ENCODE measurements at regions of chr12 and their contacts with region 1.

Region 1: GRCh38 chr12:51217968-51218606 is at the start of gene POU6F1:
- DNase-seq: no peak
- H3K4me3 ChIP-seq: peak within 1 kb of the TSS; percentile 76 to 89
- H3K27ac ChIP-seq: peak within 1 kb of the TSS; percentile 96
- H3K4me1 ChIP-seq: peaks cover 13% of the 10 kb centered on the region
- H3K27me3 ChIP-seq: no peaks in the 10 kb centered on the region
- CTCF ChIP-seq: peak in 1 of 3 experiments; percentile 40
- POLR2A ChIP-seq: peak in 1 of 2 donors; percentile 21
- total RNA-seq, gene POU6F1: 16.5 TPM

Region 2: DNA sequence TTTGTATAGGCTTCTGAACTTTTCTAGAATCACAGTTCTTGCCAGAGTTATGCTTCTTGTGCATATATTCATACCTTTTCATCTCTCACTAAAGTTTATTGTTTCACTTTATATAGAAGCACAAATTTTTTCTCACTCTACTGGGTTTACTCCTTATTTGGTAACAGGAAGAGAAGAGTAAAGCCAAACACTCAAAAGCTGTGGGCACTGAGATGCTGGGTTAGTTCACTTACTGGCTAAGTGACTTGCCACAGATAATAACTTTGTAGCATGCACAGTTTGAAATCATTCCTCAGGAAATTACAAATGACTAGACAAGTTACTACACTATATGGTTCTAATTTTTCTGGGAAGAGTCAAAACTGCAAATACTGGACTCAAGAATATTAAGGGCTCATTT is 258.0 kb before region 1 on chr12:
- intact Hi-C with region 1: no loop called
- DNase-seq: no peak
- H3K4me3 ChIP-seq: no peak overlapping the region
- H3K27ac ChIP-seq: no peak overlapping the region
- H3K4me1 ChIP-seq: no peaks in the 10 kb centered on the region
- H3K27me3 ChIP-seq: no peaks in the 10 kb centered on the region
- CTCF ChIP-seq: no peak
- POLR2A ChIP-seq: no peak

Region 3: GRCh38 chr12:51172515-51173431 is 45.3 kb before region 1 on chr12 and contains the start of gene TFCP2:
- intact Hi-C with region 1: loop called (anchors 2 kb)
- DNase-seq: peak in 1 of 2 donors; percentile 97
- H3K4me3 ChIP-seq: peak within 1 kb of the TSS; percentile 79 to 91
- H3K27ac ChIP-seq: peak within 1 kb of the TSS; percentile 97
- H3K4me1 ChIP-seq: peaks cover 21% of the 10 kb centered on the region
- H3K27me3 ChIP-seq: no peaks in the 10 kb centered on the region
- CTCF ChIP-seq: no peak
- POLR2A ChIP-seq: peak in 1 of 2 donors; percentile 40
- total RNA-seq, gene TFCP2: 15.5 TPM

Measured in vagina (tissue), 2 donors.